H1 (cell line): ENCODE measurements at regions of chr7 and their contacts with region 1.

Region 1: DNA sequence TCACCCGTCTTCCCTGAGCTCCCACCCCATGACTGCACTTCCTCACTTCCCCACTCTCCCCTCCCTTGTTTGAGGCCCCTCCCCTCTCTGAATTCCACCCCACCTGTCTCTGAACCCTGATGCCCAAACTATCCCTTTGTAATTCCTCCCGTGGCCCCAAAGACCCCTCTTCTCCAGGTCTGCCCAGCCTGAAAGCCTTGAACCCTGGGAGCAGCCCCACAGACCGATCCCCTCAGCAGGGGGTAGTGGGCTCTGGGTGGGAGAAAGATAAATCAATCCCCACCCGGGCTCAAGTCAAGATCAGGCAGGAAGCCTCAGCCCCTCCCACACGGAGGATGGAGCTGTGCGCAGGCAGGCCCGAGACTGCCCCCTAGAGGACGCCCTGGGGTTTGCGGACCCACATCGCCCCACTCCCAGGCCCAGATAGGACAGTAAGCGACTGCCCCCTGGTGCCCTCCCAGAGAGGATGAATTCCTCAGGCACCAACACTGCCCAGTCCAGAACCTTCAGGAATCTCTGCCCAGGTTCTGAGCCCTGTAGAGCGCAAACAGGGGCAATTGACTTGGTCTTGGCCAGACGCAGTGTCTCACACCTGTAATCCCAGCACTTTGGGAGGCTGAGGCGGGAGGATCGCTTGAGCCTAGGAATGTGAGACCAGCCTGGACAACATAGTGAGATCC is 11.7 kb downstream of the HSPB1 start:
- DNase-seq: peak; percentile 95 to 100
- H3K4me3 ChIP-seq: peak overlapping the region in 3 of 4 experiments; percentile 34 to 62 (median 49); a peak in 5 of 8 replicates
- H3K27ac ChIP-seq: no peak overlapping the region
- H3K4me1 ChIP-seq: peaks cover 0 to 14% (median 7%) of the 10 kb centered on the region in 4 experiments; a peak in 6 of 7 replicates
- H3K27me3 ChIP-seq: no peaks in the 10 kb centered on the region
- CTCF ChIP-seq: peak; percentile 99 to 100 (median 100)
- EP300 ChIP-seq: no peak
- POLR2A ChIP-seq: no peak
- RAD21 ChIP-seq: peak; percentile 99 to 100

Region 2: GRCh38 chr7:75639071-75639885 is 674.9 kb before region 1 on chr7:
- CTCF ChIA-PET with region 1: no interaction called
- POLR2A ChIA-PET with region 1: no interaction called
- DNase-seq: peak in 1 of 2 experiments; percentile 87
- H3K4me3 ChIP-seq: peak overlapping the region; percentile 45 to 89 (median 86)
- H3K27ac ChIP-seq: peak overlapping the region; percentile 98
- H3K4me1 ChIP-seq: peaks cover 0 to 23% (median 8%) of the 10 kb centered on the region in 4 experiments; a peak in 6 of 7 replicates
- H3K27me3 ChIP-seq: no peaks in the 10 kb centered on the region
- CTCF ChIP-seq: no peak
- EP300 ChIP-seq: peak in 1 of 2 experiments; percentile 62; a peak in 1 of 3 replicates
- POLR2A ChIP-seq: peak in 1 of 2 experiments; percentile 60; a peak in 1 of 3 replicates
- RAD21 ChIP-seq: no peak

Region 3: GRCh38 chr7:76047811-76048667 is 266.1 kb before region 1 on chr7 and contains the starts of genes MDH2 and STYXL1:
- CTCF ChIA-PET with region 1: interaction called, 3 read pairs
- POLR2A ChIA-PET with region 1: interaction called, 15 read pairs
- DNase-seq: peak; percentile 81 to 93
- H3K4me3 ChIP-seq: peak within 1 kb of the TSS; percentile 94 to 97 (median 96)
- H3K27ac ChIP-seq: peak within 1 kb of the TSS; percentile 79
- H3K4me1 ChIP-seq: peaks cover 0 to 4% (median 3%) of the 10 kb centered on the region in 4 experiments; a peak in 6 of 7 replicates
- H3K27me3 ChIP-seq: no peaks in the 10 kb centered on the region
- CTCF ChIP-seq: peak in 1 of 3 experiments; percentile 2; a peak in 1 of 4 replicates
- EP300 ChIP-seq: no peak
- POLR2A ChIP-seq: peak; percentile 95
- RAD21 ChIP-seq: no peak
- total RNA-seq, gene MDH2: 254 TPM in 2 replicates
- total RNA-seq, gene STYXL1: 26.4 and 32.3 TPM in 2 replicates

Region 4: DNA sequence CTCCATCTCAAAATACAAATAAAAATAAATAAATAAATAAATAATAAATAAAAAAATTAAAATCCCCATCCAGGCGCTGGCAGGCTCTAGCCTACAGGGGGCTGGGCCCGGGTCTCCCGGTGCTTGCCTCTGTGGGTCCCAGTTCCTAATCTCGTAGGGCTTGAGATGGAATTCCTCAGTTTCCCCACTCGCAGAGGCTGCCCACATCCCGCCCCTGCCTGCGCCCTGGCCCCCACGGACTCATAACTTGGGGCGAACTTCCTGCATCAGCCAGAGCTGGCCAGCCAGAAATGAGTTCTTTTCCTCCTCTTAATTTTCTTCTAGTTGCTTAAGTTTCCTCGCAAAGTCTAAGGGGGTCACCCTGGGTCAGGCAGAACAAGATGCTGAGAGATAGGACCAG is 134.5 kb before region 1 on chr7:
- CTCF ChIA-PET with region 1: interaction called, 37 read pairs
- POLR2A ChIA-PET with region 1: interaction called, 3 read pairs
- DNase-seq: no peak
- H3K4me3 ChIP-seq: no peak overlapping the region
- H3K27ac ChIP-seq: no peak overlapping the region
- H3K4me1 ChIP-seq: peaks cover 0 to 3% (median 1%) of the 10 kb centered on the region in 4 experiments; a peak in 3 of 7 replicates
- H3K27me3 ChIP-seq: no peaks in the 10 kb centered on the region
- CTCF ChIP-seq: no peak
- EP300 ChIP-seq: no peak
- POLR2A ChIP-seq: no peak
- RAD21 ChIP-seq: no peak; a peak in 1 of 4 replicates

Region 5: GRCh38 chr7:76262683-76263402 is 51.3 kb before region 1 on chr7:
- CTCF ChIA-PET with region 1: interaction called, 43 read pairs
- POLR2A ChIA-PET with region 1: interaction called, 10 read pairs
- DNase-seq: peak; percentile 69 to 83
- H3K4me3 ChIP-seq: no peak overlapping the region
- H3K27ac ChIP-seq: no peak overlapping the region
- H3K4me1 ChIP-seq: peaks cover 3 to 32% (median 22%) of the 10 kb centered on the region in 4 experiments
- H3K27me3 ChIP-seq: peaks cover 0 to 5% (median 2%) of the 10 kb centered on the region in 4 experiments; a peak in 3 of 7 replicates
- CTCF ChIP-seq: peak in 2 of 3 experiments; percentile 92 to 95; a peak in 3 of 4 replicates
- EP300 ChIP-seq: no peak
- POLR2A ChIP-seq: no peak
- RAD21 ChIP-seq: peak; percentile 96 to 98

Region 6: GRCh38 chr7:76302347-76303201 is 11.6 kb before region 1 on chr7 and contains the start of gene HSPB1:
- CTCF ChIA-PET with region 1: interaction called, 426 read pairs
- POLR2A ChIA-PET with region 1: interaction called, 31 read pairs
- DNase-seq: peak in 1 of 2 experiments; percentile 87
- H3K4me3 ChIP-seq: peak within 1 kb of the TSS; percentile 44 to 68 (median 48)
- H3K27ac ChIP-seq: no peak within 1 kb of the TSS
- H3K4me1 ChIP-seq: peaks cover 0 to 8% (median 3%) of the 10 kb centered on the region in 4 experiments; a peak in 2 of 7 replicates
- H3K27me3 ChIP-seq: peaks cover 0 to 6% (median 4%) of the 10 kb centered on the region in 4 experiments; a peak in 3 of 7 replicates
- CTCF ChIP-seq: no peak; a peak in 1 of 4 replicates
- EP300 ChIP-seq: no peak
- POLR2A ChIP-seq: peak in 1 of 2 experiments; percentile 53; a peak in 1 of 3 replicates
- RAD21 ChIP-seq: no peak
- total RNA-seq, gene HSPB1: 165 and 194 TPM in 2 replicates

Region 7: GRCh38 chr7:76352193-76352592 is 38.0 kb after region 1 on chr7:
- CTCF ChIA-PET with region 1: interaction called, 3 read pairs
- POLR2A ChIA-PET with region 1: interaction called, 13 read pairs
- DNase-seq: no peak
- H3K4me3 ChIP-seq: no peak overlapping the region
- H3K27ac ChIP-seq: no peak overlapping the region
- H3K4me1 ChIP-seq: peaks cover 0 to 3% (median 1%) of the 10 kb centered on the region in 4 experiments; a peak in 3 of 7 replicates
- H3K27me3 ChIP-seq: no peaks in the 10 kb centered on the region
- CTCF ChIP-seq: no peak
- EP300 ChIP-seq: no peak
- POLR2A ChIP-seq: no peak
- RAD21 ChIP-seq: no peak

Region 8: GRCh38 chr7:76509931-76510877 is 196.0 kb after region 1 on chr7 and contains the start of gene UPK3B:
- CTCF ChIA-PET with region 1: no interaction called
- POLR2A ChIA-PET with region 1: no interaction called
- DNase-seq: peak; percentile 61 to 83
- H3K4me3 ChIP-seq: peak within 1 kb of the TSS in 1 of 4 experiments; percentile 5; a peak in 2 of 8 replicates
- H3K27ac ChIP-seq: no peak within 1 kb of the TSS
- H3K4me1 ChIP-seq: peaks cover 0 to 17% (median 11%) of the 10 kb centered on the region in 4 experiments; a peak in 6 of 7 replicates
- H3K27me3 ChIP-seq: no peaks in the 10 kb centered on the region
- CTCF ChIP-seq: peak in 2 of 3 experiments; percentile 30 to 33; a peak in 2 of 4 replicates
- EP300 ChIP-seq: no peak
- POLR2A ChIP-seq: no peak; a peak in 1 of 3 replicates
- RAD21 ChIP-seq: peak; percentile 41 to 51; a peak in 3 of 4 replicates
- total RNA-seq, gene UPK3B: 18.4 and 20.6 TPM in 2 replicates